ENCODE measurements at regions of chr9 and their contacts with region 1.

Region 1: DNA sequence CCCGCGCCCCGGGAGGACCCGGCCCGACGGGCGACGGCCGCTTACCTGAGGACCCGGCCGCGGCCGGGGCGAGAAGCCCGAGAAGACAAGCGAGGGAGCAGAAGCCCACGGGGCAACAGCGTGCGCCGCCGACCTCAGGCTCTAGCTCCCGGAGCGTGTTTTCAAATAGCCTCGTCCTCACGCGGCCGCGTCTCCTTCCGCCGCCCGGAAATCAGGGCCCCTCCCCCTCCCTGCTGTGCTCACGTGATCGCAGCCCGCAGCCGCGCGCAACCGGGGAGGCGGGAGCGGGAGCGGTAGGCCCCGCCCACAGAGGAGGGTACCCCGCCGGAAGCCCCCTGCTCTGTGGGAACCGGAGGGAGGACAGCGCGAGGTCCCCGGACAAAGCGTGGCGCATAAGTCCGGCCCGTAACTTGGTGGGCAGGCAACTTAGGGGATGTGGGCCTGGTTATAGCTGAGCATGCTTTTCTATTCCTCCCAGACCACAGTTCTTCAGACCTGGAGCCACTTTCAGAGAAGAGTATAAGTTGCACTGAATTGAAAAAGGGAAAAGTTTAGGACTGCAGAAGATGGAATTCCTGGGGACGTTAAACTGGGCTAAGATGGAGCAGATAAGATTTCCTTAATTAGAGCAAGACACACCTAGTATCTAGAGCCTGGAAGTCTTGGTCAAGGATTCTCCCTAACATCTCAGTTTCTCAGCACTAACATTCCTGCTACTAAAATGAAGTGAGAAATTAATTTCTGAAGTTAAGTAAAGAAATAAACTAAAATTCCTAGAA is at the start of gene TEX10:
- DNase-seq: peak; percentile 91
- ATAC-seq: peak; percentile 88
- H3K4me3 Mint-ChIP-seq: peak within 1 kb of the TSS; percentile 98
- H3K27ac Mint-ChIP-seq: peak within 1 kb of the TSS; percentile 90
- H3K4me1 Mint-ChIP-seq: peaks cover 48% of the 10 kb centered on the region
- H3K27me3 Mint-ChIP-seq: no peaks in the 10 kb centered on the region
- total RNA-seq, gene TEX10: 21.0 to 24.4 TPM

Region 2: DNA sequence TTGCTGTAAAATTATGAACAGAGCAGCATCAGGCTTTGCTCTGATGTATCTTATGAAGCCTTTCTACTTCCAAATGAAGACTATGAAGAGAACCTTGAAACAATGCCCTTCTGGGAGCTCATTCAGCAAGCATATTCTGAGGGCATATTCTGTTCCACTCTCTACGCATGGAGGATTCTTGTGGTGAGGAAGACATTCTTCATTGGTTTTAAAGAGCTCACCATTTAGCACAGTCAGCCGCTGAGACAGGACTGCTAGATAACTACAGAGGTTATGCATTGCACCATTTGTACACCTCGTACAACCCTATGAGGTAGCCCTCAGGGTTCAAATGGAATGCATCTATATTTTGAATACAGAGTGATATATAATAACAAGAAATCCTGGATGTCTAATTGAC is 192.9 kb before region 1 on chr9:
- CTCF ChIA-PET with region 1: no interaction called
- DNase-seq: no peak
- ATAC-seq: no peak
- H3K4me3 Mint-ChIP-seq: no peak overlapping the region
- H3K27ac Mint-ChIP-seq: no peak overlapping the region
- H3K4me1 Mint-ChIP-seq: no peaks in the 10 kb centered on the region
- H3K27me3 Mint-ChIP-seq: no peaks in the 10 kb centered on the region

Region 3: GRCh38 chr9:100281676-100282387 is 71.1 kb before region 1 on chr9:
- CTCF ChIA-PET with region 1: no interaction called
- DNase-seq: no peak
- ATAC-seq: no peak
- H3K4me3 Mint-ChIP-seq: no peak overlapping the region
- H3K27ac Mint-ChIP-seq: no peak overlapping the region
- H3K4me1 Mint-ChIP-seq: no peaks in the 10 kb centered on the region
- H3K27me3 Mint-ChIP-seq: no peaks in the 10 kb centered on the region

Region 4: GRCh38 chr9:100341889-100342288 is 11.0 kb before region 1 on chr9:
- CTCF ChIA-PET with region 1: interaction called, 10 read pairs
- DNase-seq: no peak
- ATAC-seq: no peak
- H3K4me3 Mint-ChIP-seq: no peak overlapping the region
- H3K27ac Mint-ChIP-seq: no peak overlapping the region
- H3K4me1 Mint-ChIP-seq: peaks cover 10% of the 10 kb centered on the region
- H3K27me3 Mint-ChIP-seq: no peaks in the 10 kb centered on the region

Region 5: DNA sequence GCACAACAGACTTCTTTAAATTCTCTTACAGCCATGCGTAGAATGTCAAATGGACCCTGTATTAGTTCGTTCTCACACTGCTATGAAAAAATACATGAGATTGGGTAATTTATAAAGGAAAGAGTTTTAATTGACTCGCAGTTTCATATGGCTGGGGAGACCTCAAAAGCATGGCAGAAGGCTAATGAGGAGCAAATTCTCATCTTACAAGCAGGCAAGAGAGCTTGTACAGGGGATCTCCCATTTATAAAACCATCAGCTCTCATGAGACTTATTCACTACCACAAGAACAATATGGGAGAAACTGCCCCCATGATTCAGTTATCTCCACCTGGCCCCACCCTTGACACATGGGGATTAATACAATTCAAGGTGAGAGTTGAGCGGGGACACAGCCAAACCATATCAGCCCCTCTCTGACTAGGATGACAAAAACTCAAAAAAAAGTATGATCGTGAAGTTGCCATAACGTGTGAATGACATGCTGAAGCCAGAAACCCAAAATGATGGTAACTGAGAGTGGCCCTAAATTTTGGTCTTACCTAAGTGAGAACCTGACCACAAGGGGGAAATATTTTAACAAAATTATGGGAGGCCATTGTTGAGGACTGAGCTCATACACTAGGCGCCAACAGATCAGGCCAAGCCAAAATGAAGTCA is 17.3 kb after region 1 on chr9:
- CTCF ChIA-PET with region 1: no interaction called
- DNase-seq: no peak
- ATAC-seq: no peak
- H3K4me3 Mint-ChIP-seq: no peak overlapping the region
- H3K27ac Mint-ChIP-seq: no peak overlapping the region
- H3K4me1 Mint-ChIP-seq: no peaks in the 10 kb centered on the region
- H3K27me3 Mint-ChIP-seq: no peaks in the 10 kb centered on the region